Transverse colon (tissue), 4 donors: ENCODE measurements at regions of chr1 and their contacts with region 1.

Region 1: GRCh38 chr1:44294588-44295007 is 60.5 kb downstream of the ERI3 start:
- DNase-seq: peak; percentile 64
- H3K4me3 ChIP-seq: no peak overlapping the region
- H3K27ac ChIP-seq: peak overlapping the region; percentile 34 to 62 (median 42)
- H3K4me1 ChIP-seq: peaks cover 9 to 22% (median 15%) of the 10 kb centered on the region in 4 donors
- H3K27me3 ChIP-seq: no peaks in the 10 kb centered on the region
- CTCF ChIP-seq: peak; percentile 42 to 78 (median 56)
- EP300 ChIP-seq: no peak
- POLR2A ChIP-seq: no peak

Region 2: GRCh38 chr1:44220001-44220733 is 74.4 kb before region 1 on chr1:
- in situ Hi-C with region 1: loop called in 1 of 4 experiments (anchors 10 kb)
- intact Hi-C with region 1: no loop called
- DNase-seq: no peak
- H3K4me3 ChIP-seq: no peak overlapping the region
- H3K27ac ChIP-seq: no peak overlapping the region
- H3K4me1 ChIP-seq: peaks cover 0 to 6% (median 5%) of the 10 kb centered on the region in 4 donors
- H3K27me3 ChIP-seq: no peaks in the 10 kb centered on the region
- CTCF ChIP-seq: no peak
- EP300 ChIP-seq: no peak
- POLR2A ChIP-seq: no peak

Region 3: GRCh38 chr1:44346184-44346583 is 51.6 kb after region 1 on chr1:
- in situ Hi-C with region 1: no loop called
- intact Hi-C with region 1: loop called (anchors 1 kb)
- DNase-seq: no peak
- H3K4me3 ChIP-seq: no peak overlapping the region
- H3K27ac ChIP-seq: no peak overlapping the region
- H3K4me1 ChIP-seq: no peaks in the 10 kb centered on the region
- H3K27me3 ChIP-seq: no peaks in the 10 kb centered on the region
- CTCF ChIP-seq: no peak
- EP300 ChIP-seq: no peak
- POLR2A ChIP-seq: no peak

Region 4: GRCh38 chr1:44553771-44554170 is 259.2 kb after region 1 on chr1:
- in situ Hi-C with region 1: no loop called
- intact Hi-C with region 1: no loop called
- DNase-seq: no peak
- H3K4me3 ChIP-seq: no peak overlapping the region
- H3K27ac ChIP-seq: no peak overlapping the region
- H3K4me1 ChIP-seq: no peaks in the 10 kb centered on the region
- H3K27me3 ChIP-seq: peaks cover 6% of the 10 kb centered on the region
- CTCF ChIP-seq: no peak
- EP300 ChIP-seq: no peak
- POLR2A ChIP-seq: no peak

Region 5: DNA sequence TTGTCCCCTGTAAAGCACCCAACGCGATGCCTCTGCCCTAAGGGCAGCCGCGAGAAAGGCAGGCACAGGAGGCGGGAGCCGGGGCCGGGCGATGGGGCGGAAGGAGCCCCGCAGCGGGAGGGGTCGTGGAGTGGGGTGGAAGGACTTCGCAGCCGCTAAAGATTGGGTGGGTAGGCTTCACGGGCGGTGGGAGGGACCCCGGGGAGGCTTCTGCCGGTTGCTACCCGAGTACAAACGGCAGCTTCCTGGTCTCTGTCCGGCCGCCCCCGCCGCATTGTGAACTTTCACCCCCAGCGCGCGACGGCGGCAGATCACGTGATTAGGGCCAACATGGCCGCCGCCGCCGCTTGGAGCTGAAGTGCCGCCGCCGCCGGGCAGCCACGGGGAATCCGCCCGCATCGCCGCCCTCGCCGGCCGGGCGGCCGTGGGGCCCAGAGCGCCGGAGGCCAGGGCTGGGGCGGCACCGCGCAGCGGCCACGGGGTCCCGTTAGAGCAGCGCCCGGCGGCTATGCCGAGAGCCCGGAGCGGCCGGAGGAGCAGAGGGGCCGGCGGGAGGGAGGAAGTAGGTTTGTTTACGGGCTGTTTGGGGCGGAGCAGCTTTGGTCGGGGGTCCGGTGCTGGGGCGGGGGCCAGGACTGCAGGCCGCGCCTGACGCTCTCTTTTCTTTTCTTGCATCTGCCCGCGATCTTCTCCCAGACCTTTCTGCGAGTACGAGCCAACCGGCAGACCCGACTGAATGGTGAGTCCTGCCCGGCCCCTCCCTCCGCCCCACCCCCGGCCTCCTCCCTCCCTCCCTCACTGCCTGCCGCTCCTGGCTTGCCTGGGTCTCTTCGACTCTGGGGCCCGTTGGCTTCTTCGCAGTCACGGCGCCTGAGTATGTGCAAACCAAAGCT is 337.3 kb after region 1 on chr1:
- in situ Hi-C with region 1: no loop called
- intact Hi-C with region 1: no loop called
- DNase-seq: peak; percentile 93
- H3K4me3 ChIP-seq: peak overlapping the region; percentile 77 to 86 (median 84)
- H3K27ac ChIP-seq: peak overlapping the region; percentile 93 to 98 (median 96)
- H3K4me1 ChIP-seq: peaks cover 16 to 39% (median 19%) of the 10 kb centered on the region in 4 donors
- H3K27me3 ChIP-seq: no peaks in the 10 kb centered on the region
- CTCF ChIP-seq: no peak
- EP300 ChIP-seq: no peak
- POLR2A ChIP-seq: peak; percentile 84

Region 6: GRCh38 chr1:45037456-45037855 is 742.9 kb after region 1 on chr1:
- in situ Hi-C with region 1: no loop called
- intact Hi-C with region 1: no loop called
- DNase-seq: no peak
- H3K4me3 ChIP-seq: no peak overlapping the region
- H3K27ac ChIP-seq: no peak overlapping the region
- H3K4me1 ChIP-seq: peaks cover 0 to 17% (median 7%) of the 10 kb centered on the region in 4 donors
- H3K27me3 ChIP-seq: no peaks in the 10 kb centered on the region
- CTCF ChIP-seq: no peak
- EP300 ChIP-seq: no peak
- POLR2A ChIP-seq: no peak